Activated naive CD4-positive, alpha-beta T cell treated with anti-CD3 and anti-CD28 coated beads for 36 hours (primary cell): ENCODE measurements at regions of chr2 and their contacts with region 1.

Region 1: DNA sequence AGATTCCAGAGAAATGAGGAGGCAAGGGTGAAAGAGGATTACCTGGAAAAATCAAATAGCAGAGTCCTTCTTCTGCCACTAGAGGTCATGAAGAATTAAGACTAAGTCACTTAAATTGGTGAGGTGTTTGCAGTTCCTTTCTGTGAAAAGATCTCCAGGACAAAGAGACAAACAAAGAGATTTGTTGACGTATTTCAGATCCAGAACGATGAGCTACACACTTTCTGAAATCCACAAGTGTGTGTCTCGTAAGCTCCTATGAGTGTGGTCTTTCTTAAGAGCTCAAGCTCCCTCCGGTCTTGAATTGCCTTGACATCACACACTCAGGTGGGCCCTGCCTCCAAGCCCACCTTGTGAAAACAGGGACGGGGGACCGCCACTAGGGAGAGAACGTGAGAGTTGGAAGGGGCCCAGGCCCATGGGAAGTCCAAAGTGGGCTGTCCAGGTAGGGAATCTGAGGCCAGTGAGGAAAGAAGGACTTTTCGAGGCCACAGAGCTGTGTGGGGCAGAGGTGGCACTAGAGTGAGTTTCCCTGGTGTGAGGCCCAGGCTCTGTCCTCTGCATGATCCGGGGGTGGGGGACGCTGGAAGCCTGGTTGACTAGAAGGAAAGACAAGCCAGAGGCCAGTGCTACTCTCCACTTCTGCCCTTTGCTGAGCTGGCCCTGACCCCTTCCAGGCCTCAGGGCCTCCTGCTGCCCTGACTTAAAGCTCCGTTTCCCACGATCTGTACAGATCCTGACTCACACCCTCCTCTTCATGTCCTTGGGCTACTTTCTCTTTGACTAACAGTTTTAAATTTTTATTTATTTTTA is 168.1 kb upstream of the NCK2 start:
- DNase-seq: no peak
- H3K4me3 Mint-ChIP-seq: no peak overlapping the region
- H3K27ac Mint-ChIP-seq: peak overlapping the region; percentile 71
- H3K4me1 Mint-ChIP-seq: peaks cover 16% of the 10 kb centered on the region
- H3K27me3 Mint-ChIP-seq: no peaks in the 10 kb centered on the region

Region 2: GRCh38 chr2:105592288-105592687 is 15.6 kb after region 1 on chr2:
- CTCF ChIA-PET with region 1: interaction called, 24 read pairs
- intact Hi-C with region 1: no loop called
- DNase-seq: no peak
- H3K4me3 Mint-ChIP-seq: no peak overlapping the region
- H3K27ac Mint-ChIP-seq: no peak overlapping the region
- H3K4me1 Mint-ChIP-seq: peaks cover 2% of the 10 kb centered on the region
- H3K27me3 Mint-ChIP-seq: no peaks in the 10 kb centered on the region

Region 3: GRCh38 chr2:105802587-105802986 is 225.9 kb after region 1 on chr2:
- CTCF ChIA-PET with region 1: interaction called, 6 read pairs
- intact Hi-C with region 1: loop called (anchors 5 kb)
- DNase-seq: peak; percentile 82
- H3K4me3 Mint-ChIP-seq: peak overlapping the region; percentile 8
- H3K27ac Mint-ChIP-seq: peak overlapping the region; percentile 86
- H3K4me1 Mint-ChIP-seq: peaks cover 94% of the 10 kb centered on the region
- H3K27me3 Mint-ChIP-seq: no peaks in the 10 kb centered on the region

Region 4: GRCh38 chr2:105969555-105969954 is 392.9 kb after region 1 on chr2:
- CTCF ChIA-PET with region 1: interaction called, 3 read pairs
- intact Hi-C with region 1: loop called (anchors 1 kb)
- DNase-seq: peak; percentile 35
- H3K4me3 Mint-ChIP-seq: no peak overlapping the region
- H3K27ac Mint-ChIP-seq: no peak overlapping the region
- H3K4me1 Mint-ChIP-seq: peaks cover 23% of the 10 kb centered on the region
- H3K27me3 Mint-ChIP-seq: no peaks in the 10 kb centered on the region

Region 5: GRCh38 chr2:106542811-106543259 is 966.2 kb after region 1 on chr2:
- CTCF ChIA-PET with region 1: no interaction called
- intact Hi-C with region 1: loop called (anchors 2 kb)
- DNase-seq: peak; percentile 81
- H3K4me3 Mint-ChIP-seq: peak overlapping the region; percentile 68
- H3K27ac Mint-ChIP-seq: no peak overlapping the region
- H3K4me1 Mint-ChIP-seq: peaks cover 4% of the 10 kb centered on the region
- H3K27me3 Mint-ChIP-seq: peaks cover 8% of the 10 kb centered on the region